Activated B cell treated with CpG ODN at 0.5 μM for 24 hours (primary cell): ENCODE measurements at regions of chr4 and their contacts with region 1.

Region 1: DNA sequence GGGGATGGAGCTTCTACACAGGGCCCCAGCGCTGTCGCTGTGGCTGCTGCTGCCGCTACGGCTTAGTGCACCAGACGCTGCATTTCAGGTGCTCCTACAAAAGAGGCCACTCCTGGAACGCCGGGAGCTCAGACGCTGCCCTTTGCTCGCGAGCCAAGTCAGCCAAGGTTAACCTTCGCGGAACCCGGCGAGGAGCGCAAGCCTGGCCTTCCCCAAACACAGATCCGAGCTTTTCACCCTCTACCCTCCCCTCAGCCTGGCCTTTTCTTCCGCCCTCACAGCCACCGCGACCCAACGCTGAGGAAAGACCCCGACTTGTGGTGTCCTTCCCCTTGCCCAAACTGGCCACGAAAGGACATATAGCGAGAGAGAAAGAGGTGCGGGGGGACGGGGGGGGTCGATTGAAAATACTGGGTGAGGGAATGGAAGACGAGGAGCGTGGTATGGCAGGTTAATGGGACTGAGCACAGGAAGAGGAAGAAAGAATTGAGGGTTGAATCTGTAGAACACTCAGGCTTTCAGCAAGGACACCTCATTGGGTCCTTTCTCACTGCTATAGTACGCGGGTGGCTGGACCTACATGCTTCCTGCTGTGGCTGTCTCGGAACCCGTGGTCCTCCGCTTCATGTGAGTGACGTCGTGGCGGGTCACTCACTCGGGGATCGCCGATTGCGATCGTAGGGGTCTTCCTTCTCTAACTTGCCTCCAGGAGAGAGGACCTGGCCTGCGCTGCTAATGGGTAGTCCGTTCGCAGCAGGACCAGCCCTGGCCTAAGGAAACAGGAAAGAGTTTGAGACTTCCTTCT is at the starts of genes AIMP1 and TBCK:
- DNase-seq: peak; percentile 78
- ATAC-seq: peak; percentile 90
- H3K4me3 Mint-ChIP-seq: no peak within 1 kb of the TSS
- H3K27ac Mint-ChIP-seq: no peak within 1 kb of the TSS
- H3K4me1 Mint-ChIP-seq: peaks cover 35% of the 10 kb centered on the region
- H3K27me3 Mint-ChIP-seq: no peaks in the 10 kb centered on the region
- CTCF ChIP-seq: no peak
- total RNA-seq, gene AIMP1: 49.4 and 53.5 TPM in 2 replicates
- total RNA-seq, gene TBCK: 45.6 and 60.1 TPM in 2 replicates

Region 2: DNA sequence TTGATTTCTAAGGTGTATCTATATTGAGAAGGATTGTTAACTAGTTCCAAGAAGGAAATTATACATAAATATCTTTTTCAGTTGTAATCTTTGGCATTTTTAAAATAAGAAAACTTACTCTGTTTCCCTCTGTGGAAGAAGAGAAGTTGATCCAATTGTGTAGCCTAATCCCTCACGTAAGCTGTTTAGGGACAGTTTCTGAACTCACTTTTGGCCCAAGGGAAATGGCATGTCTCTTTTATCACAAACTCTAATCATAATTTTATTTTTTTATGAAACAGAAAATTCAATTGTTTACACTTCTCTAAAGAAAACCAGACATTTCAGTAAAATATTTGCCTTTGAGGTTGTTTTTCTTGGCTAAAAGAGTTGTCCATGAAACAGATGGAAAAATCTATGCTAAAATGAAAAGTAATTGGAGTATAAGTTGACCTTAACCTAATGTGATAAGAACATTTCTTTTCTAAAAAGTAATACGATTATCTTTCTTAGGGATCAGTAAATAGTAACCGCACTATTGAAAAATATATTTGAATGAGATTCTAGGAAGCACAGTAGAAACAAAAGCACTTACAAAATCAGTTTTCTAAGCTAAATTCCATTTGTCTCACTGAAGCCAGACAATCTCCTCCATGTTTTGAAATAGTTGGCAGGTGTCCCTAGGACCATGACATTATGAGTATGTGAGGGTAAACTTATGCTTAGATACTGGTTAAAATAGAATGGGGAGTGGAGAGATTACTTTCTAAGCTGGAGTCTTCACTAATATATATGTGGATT is 1189.8 kb before region 1 on chr4:
- CTCF ChIA-PET with region 1: no interaction called
- POLR2A ChIA-PET with region 1: no interaction called
- intact Hi-C with region 1: no loop called
- DNase-seq: no peak
- ATAC-seq: no peak
- H3K4me3 Mint-ChIP-seq: no peak overlapping the region
- H3K27ac Mint-ChIP-seq: no peak overlapping the region
- H3K4me1 Mint-ChIP-seq: no peaks in the 10 kb centered on the region
- H3K27me3 Mint-ChIP-seq: no peaks in the 10 kb centered on the region
- CTCF ChIP-seq: no peak

Region 3: GRCh38 chr4:106329041-106329618 is 13.0 kb after region 1 on chr4:
- CTCF ChIA-PET with region 1: no interaction called
- POLR2A ChIA-PET with region 1: interaction called, 6 read pairs
- intact Hi-C with region 1: loop called (anchors 2 kb)
- DNase-seq: no peak
- ATAC-seq: peak; percentile 64
- H3K4me3 Mint-ChIP-seq: no peak overlapping the region
- H3K27ac Mint-ChIP-seq: no peak overlapping the region
- H3K4me1 Mint-ChIP-seq: no peaks in the 10 kb centered on the region
- H3K27me3 Mint-ChIP-seq: no peaks in the 10 kb centered on the region
- CTCF ChIP-seq: peak; percentile 51

Region 4: GRCh38 chr4:107719922-107720722 is 1404.0 kb after region 1 on chr4 and contains the start of gene PAPSS1:
- CTCF ChIA-PET with region 1: no interaction called
- POLR2A ChIA-PET with region 1: interaction called, 11 read pairs
- intact Hi-C with region 1: loop called (anchors 1 kb)
- DNase-seq: peak; percentile 92
- ATAC-seq: peak; percentile 87
- H3K4me3 Mint-ChIP-seq: peak within 1 kb of the TSS; percentile 97
- H3K27ac Mint-ChIP-seq: peak within 1 kb of the TSS; percentile 96
- H3K4me1 Mint-ChIP-seq: peaks cover 34% of the 10 kb centered on the region
- H3K27me3 Mint-ChIP-seq: no peaks in the 10 kb centered on the region
- CTCF ChIP-seq: no peak
- total RNA-seq, gene PAPSS1: 31.8 and 34.2 TPM in 2 replicates